ENCODE measurements at regions of chr2 and their contacts with region 1.

Region 1: DNA sequence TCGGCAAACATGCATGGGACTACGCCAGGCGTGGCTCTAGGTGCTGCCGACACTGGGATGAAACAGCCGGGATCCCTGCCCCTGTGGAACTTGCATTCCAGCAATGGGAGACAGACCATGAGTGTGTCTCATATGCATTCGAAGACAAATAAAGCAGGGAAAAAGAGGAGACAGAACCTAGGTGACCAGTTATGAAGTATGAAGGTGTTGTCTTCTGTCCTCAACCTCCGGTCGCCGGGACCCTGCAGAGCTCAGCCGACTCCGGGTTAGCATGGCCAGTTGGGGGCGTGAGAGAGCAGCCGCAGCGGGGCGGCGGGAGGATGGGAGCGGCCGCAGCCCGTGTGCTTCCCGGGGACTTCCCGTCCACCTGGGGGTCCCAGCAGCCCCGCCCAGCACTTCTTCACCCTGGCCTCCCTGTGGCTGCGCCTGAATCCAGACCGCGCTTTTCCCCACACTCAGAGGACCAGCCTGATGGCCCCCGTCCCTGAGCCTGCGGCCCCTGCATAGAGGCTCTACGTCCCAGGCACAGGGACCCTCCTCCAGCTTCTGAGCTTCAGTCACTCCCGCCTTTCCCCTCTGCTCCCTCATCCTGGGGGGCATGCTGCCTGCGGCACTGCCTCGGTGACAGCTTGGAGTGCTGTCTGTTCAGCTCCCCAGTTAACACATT is 11.4 kb downstream of the ID2 start:
- DNase-seq: peak; percentile 58
- ATAC-seq: peak; percentile 84
- H3K4me3 ChIP-seq: peak overlapping the region; percentile 63
- H3K27ac ChIP-seq: no peak overlapping the region
- H3K4me1 ChIP-seq: peaks cover 23% of the 10 kb centered on the region
- H3K27me3 ChIP-seq: no peaks in the 10 kb centered on the region
- CTCF ChIP-seq: peak; percentile 88

Region 2: GRCh38 chr2:8477552-8478470 is 215.5 kb before region 1 on chr2:
- CTCF ChIA-PET with region 1: no interaction called
- POLR2A ChIA-PET with region 1: no interaction called
- intact Hi-C with region 1: no loop called
- DNase-seq: peak; percentile 30
- ATAC-seq: no peak
- H3K4me3 ChIP-seq: no peak overlapping the region
- H3K27ac ChIP-seq: no peak overlapping the region
- H3K4me1 ChIP-seq: peaks cover 28% of the 10 kb centered on the region
- H3K27me3 ChIP-seq: no peaks in the 10 kb centered on the region
- CTCF ChIP-seq: no peak

Region 3: DNA sequence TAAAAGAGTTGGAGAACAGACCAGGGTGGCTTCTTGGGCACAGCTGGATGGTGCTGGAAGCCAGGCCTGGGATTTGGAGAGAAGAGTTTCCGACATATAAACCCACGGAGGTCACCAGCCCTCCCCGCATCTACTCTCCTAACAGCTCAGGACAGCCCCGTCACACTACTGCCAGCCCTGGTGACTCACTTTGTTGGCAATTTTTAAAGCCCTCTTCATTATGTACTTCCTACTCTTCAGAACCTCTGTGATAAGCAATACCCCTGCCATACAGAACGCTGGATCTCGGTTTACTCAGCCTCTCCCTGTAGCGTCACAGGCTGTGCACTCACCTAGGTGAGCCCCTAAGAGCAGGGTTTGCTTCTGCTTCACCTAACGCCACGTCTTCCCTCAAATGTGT is 36.7 kb after region 1 on chr2:
- CTCF ChIA-PET with region 1: no interaction called
- POLR2A ChIA-PET with region 1: no interaction called
- intact Hi-C with region 1: loop called (anchors 2 kb)
- DNase-seq: peak; percentile 77
- ATAC-seq: peak; percentile 95
- H3K4me3 ChIP-seq: no peak overlapping the region
- H3K27ac ChIP-seq: peak overlapping the region; percentile 58
- H3K4me1 ChIP-seq: peaks cover 26% of the 10 kb centered on the region
- H3K27me3 ChIP-seq: no peaks in the 10 kb centered on the region
- CTCF ChIP-seq: no peak

Region 4: GRCh38 chr2:8761529-8762164 is 68.4 kb after region 1 on chr2:
- CTCF ChIA-PET with region 1: interaction called, 9 read pairs
- POLR2A ChIA-PET with region 1: no interaction called
- intact Hi-C with region 1: loop called (anchors 2 kb)
- DNase-seq: peak; percentile 77
- ATAC-seq: peak; percentile 50; the same call in 1 of the 2 replicates
- H3K4me3 ChIP-seq: no peak overlapping the region
- H3K27ac ChIP-seq: no peak overlapping the region
- H3K4me1 ChIP-seq: no peaks in the 10 kb centered on the region
- H3K27me3 ChIP-seq: no peaks in the 10 kb centered on the region
- CTCF ChIP-seq: peak; percentile 78